ENCODE measurements at regions of chr1 and their contacts with region 1.

Region 1: GRCh38 chr1:235128456-235129328 is at the start of gene TOMM20:
- DNase-seq: peak; percentile 98
- total RNA-seq, gene TOMM20: 81.9 TPM

Region 2: GRCh38 chr1:235160957-235161684 is 32.4 kb after region 1 on chr1 and contains the start of gene RBM34:
- intact Hi-C with region 1: loop called (anchors 1 kb)
- DNase-seq: peak; percentile 97
- total RNA-seq, gene RBM34: 48.8 TPM